Activated CD4-positive, alpha-beta T cell treated with anti-CD3 and anti-CD28 coated beads, Interleukin-2, amount 10 ng/mL, durations not matched to agents 7 days and 5 days (primary cell): ENCODE measurements at regions of chr15 and their contacts with region 1.

Region 1: DNA sequence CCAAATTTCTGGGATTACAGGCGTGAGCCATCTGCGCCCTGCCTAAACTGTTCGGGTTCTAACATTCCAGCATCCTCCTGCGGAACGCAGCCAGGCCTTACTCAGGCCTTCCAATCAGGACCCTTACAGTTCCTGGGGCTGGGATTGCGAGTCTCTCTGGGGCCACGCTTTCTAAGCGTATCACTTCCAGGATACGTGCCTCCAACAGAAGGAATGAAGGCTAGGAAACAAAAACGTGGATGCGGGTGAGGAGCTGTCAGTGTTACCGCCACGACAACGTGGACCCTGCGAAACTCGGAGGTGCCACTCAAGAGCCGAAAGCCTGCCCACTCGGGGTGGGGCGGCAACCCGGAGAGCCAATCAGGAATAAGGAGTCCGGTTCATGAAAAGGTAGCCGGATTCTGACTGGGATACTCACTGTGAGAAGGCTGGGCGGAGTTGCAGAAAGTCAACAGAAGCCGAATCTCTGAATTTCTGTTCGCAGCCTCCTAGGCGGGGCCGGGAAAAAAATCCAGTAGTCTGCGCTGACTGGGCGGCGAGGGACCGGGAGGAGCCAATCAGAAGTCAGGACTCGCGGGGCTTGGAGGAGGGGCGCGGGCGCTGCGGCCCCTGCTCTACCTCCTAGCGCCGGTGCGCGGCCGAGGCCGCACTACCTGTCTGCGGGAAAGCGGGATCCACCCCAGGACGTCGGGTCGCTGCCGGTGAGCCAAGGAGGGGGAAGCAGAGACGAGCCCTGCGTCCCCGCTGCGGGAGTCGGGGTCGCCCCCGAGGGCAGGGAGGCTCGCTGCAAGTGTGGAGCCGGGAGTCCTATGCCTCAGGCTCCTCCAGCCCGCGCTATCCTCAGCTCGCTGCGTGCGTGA is at the start of gene HYKK:
- DNase-seq: peak; percentile 85
- H3K4me3 Mint-ChIP-seq: peak within 1 kb of the TSS; percentile 95
- H3K27ac Mint-ChIP-seq: peak within 1 kb of the TSS; percentile 80
- H3K4me1 Mint-ChIP-seq: peaks cover 29% of the 10 kb centered on the region
- H3K27me3 Mint-ChIP-seq: peaks cover 4% of the 10 kb centered on the region
- total RNA-seq, gene HYKK: 3.7 to 4.7 TPM

Region 2: GRCh38 chr15:78225783-78226541 is 281.2 kb before region 1 on chr15:
- CTCF ChIA-PET with region 1: no interaction called
- POLR2A ChIA-PET with region 1: no interaction called
- DNase-seq: no peak
- H3K4me3 Mint-ChIP-seq: no peak overlapping the region
- H3K27ac Mint-ChIP-seq: no peak overlapping the region
- H3K4me1 Mint-ChIP-seq: peaks cover 6% of the 10 kb centered on the region
- H3K27me3 Mint-ChIP-seq: peaks cover 3% of the 10 kb centered on the region

Region 3: DNA sequence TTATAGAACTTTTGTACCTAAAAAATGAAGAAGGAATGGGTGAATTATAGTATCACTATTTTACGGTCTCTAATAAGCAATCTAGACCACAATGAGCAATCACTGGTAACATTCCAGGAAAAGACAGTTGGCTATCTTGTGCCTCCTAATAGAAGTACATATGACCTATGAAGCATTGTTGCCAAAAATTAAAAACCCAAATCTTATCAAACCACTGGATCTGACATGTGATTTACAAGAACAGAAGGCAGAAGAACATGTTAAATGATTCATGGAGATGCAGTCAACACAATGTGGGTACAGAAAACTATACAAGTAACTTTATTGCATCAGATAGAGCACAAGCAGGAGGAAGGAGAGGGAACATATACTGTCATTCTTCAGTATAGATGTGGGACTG is 14.3 kb before region 1 on chr15:
- CTCF ChIA-PET with region 1: no interaction called
- POLR2A ChIA-PET with region 1: no interaction called
- DNase-seq: no peak
- H3K4me3 Mint-ChIP-seq: no peak overlapping the region
- H3K27ac Mint-ChIP-seq: peak overlapping the region; percentile 50
- H3K4me1 Mint-ChIP-seq: no peaks in the 10 kb centered on the region
- H3K27me3 Mint-ChIP-seq: no peaks in the 10 kb centered on the region

Region 4: DNA sequence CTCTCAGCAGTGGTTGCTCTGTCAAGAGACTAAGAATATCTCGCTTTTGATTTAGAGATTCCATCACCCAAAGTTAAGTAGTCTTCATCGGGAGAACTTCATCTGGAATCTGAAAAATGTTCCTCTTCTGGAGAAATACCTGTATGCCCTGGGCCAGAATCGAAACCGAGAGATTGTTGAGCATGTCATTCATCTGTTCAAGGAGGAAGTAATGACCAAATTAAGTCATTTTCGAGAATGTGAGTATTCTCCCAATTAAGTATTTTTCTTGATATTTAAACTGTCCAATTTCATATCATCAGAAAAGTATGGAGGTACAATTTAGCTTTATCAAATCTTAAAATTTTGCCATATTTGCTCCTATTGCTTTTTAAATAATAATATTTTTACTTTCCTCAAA is 20.1 kb after region 1 on chr15:
- CTCF ChIA-PET with region 1: no interaction called
- POLR2A ChIA-PET with region 1: no interaction called
- DNase-seq: no peak
- H3K4me3 Mint-ChIP-seq: no peak overlapping the region
- H3K27ac Mint-ChIP-seq: no peak overlapping the region
- H3K4me1 Mint-ChIP-seq: no peaks in the 10 kb centered on the region
- H3K27me3 Mint-ChIP-seq: no peaks in the 10 kb centered on the region

Region 5: DNA sequence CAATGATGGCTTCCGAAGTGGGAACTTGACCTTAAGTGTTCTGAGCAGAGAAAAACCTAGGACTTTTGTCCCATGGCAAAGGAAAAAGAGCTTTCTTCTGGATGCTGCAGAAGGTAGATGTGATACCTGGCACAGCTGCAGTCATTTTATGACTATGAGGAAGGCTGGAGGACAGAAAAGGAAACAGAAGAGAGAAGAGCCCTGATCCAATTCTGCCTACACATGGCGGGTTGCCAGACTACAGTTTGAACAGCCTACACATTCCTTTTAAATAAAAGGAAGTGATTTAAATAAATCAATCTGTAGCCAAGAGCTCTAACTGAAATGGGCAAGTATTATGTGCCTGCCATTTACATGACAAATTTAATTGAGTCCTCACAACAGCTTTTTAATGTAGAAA is 177.5 kb after region 1 on chr15:
- CTCF ChIA-PET with region 1: no interaction called
- POLR2A ChIA-PET with region 1: interaction called, 10 read pairs
- DNase-seq: no peak
- H3K4me3 Mint-ChIP-seq: no peak overlapping the region
- H3K27ac Mint-ChIP-seq: no peak overlapping the region
- H3K4me1 Mint-ChIP-seq: no peaks in the 10 kb centered on the region
- H3K27me3 Mint-ChIP-seq: peaks cover 2% of the 10 kb centered on the region

Region 6: GRCh38 chr15:78767331-78767951 is 260.2 kb after region 1 on chr15:
- CTCF ChIA-PET with region 1: no interaction called
- POLR2A ChIA-PET with region 1: no interaction called
- DNase-seq: no peak
- H3K4me3 Mint-ChIP-seq: no peak overlapping the region
- H3K27ac Mint-ChIP-seq: no peak overlapping the region
- H3K4me1 Mint-ChIP-seq: peaks cover 4% of the 10 kb centered on the region
- H3K27me3 Mint-ChIP-seq: no peaks in the 10 kb centered on the region